Endothelial cell of umbilical vein (primary cell): ENCODE measurements at regions of chr11 and their contacts with region 1.

Region 1: DNA sequence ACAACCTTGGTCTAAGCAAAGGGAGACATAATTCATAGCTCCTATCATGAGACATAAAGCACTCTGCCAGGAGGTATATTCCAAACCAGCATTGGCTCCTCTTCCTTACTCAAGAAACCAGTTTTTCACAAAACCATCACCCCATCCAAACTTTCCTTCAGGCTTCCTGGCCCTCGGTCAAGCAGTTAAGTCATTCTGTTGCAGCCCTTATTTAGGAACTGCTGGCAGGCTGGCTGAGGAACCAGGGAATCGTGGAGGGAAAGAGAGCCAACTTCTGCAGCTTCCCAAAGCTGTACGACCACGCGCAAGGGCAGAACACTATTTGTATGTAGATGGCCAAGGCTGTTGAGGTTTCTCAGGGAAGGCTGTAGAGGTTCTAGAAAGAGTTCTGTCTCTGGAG is 680 bp downstream of the IFT46 start:
- DNase-seq: no peak
- H3K4me3 ChIP-seq: no peak overlapping the region
- H3K27ac ChIP-seq: no peak overlapping the region
- H3K4me1 ChIP-seq: peaks cover 5% of the 10 kb centered on the region
- H3K27me3 ChIP-seq: no peaks in the 10 kb centered on the region
- CTCF ChIP-seq: no peak
- POLR2A ChIP-seq: no peak

Region 2: DNA sequence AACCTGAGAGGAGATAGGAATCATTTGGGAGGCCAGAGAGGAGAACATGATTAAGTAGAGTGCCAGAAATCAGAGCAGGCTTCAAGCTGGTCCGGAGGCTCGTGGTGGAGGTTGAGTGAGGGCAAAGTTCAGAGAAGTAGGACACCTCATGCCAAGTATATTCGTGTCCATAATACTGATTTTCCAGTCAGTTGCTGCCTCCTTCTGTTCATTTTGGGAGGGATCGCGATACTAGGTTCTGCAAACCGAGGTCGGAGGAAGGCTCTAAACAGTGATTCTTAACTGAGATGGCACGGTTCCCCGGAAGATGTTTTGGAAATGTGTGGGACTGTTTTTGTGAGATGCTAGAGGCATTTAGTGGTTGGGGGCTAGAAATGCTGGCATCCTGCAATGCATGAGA is 274.1 kb before region 1 on chr11:
- CTCF ChIA-PET with region 1: no interaction called
- POLR2A ChIA-PET with region 1: no interaction called
- dilution Hi-C with region 1: no loop called
- intact Hi-C with region 1: loop called (anchors 5 kb)
- DNase-seq: peak; percentile 68
- H3K4me3 ChIP-seq: no peak overlapping the region
- H3K27ac ChIP-seq: no peak overlapping the region
- H3K4me1 ChIP-seq: no peaks in the 10 kb centered on the region
- H3K27me3 ChIP-seq: no peaks in the 10 kb centered on the region
- CTCF ChIP-seq: peak; percentile 30 to 53
- POLR2A ChIP-seq: no peak

Region 3: GRCh38 chr11:118435893-118436624 is 129.0 kb before region 1 on chr11 and contains the start of gene KMT2A:
- CTCF ChIA-PET with region 1: no interaction called
- POLR2A ChIA-PET with region 1: no interaction called
- dilution Hi-C with region 1: no loop called
- intact Hi-C with region 1: loop called (anchors 5 kb)
- DNase-seq: peak; percentile 98
- H3K4me3 ChIP-seq: peak within 1 kb of the TSS; percentile 82 to 94 (median 90)
- H3K27ac ChIP-seq: peak within 1 kb of the TSS; percentile 45
- H3K4me1 ChIP-seq: peaks cover 29% of the 10 kb centered on the region
- H3K27me3 ChIP-seq: no peaks in the 10 kb centered on the region
- CTCF ChIP-seq: no peak
- POLR2A ChIP-seq: peak; percentile 81
- total RNA-seq, gene KMT2A: 63.9 and 64.1 TPM in 2 replicates

Region 4: GRCh38 chr11:118514103-118514502 is 50.9 kb before region 1 on chr11:
- CTCF ChIA-PET with region 1: no interaction called
- POLR2A ChIA-PET with region 1: no interaction called
- dilution Hi-C with region 1: no loop called
- intact Hi-C with region 1: loop called (anchors 10 kb)
- DNase-seq: no peak
- H3K4me3 ChIP-seq: no peak overlapping the region
- H3K27ac ChIP-seq: no peak overlapping the region
- H3K4me1 ChIP-seq: no peaks in the 10 kb centered on the region
- H3K27me3 ChIP-seq: no peaks in the 10 kb centered on the region
- CTCF ChIP-seq: no peak
- POLR2A ChIP-seq: no peak

Region 5: GRCh38 chr11:118530408-118531339 is 34.4 kb before region 1 on chr11 and contains the start of gene TMEM25:
- CTCF ChIA-PET with region 1: no interaction called
- POLR2A ChIA-PET with region 1: no interaction called
- dilution Hi-C with region 1: no loop called
- intact Hi-C with region 1: loop called (anchors 1 kb)
- DNase-seq: peak; percentile 69
- H3K4me3 ChIP-seq: peak within 1 kb of the TSS; percentile 19 to 78 (median 55)
- H3K27ac ChIP-seq: no peak within 1 kb of the TSS
- H3K4me1 ChIP-seq: peaks cover 10% of the 10 kb centered on the region
- H3K27me3 ChIP-seq: no peaks in the 10 kb centered on the region
- CTCF ChIP-seq: no peak
- POLR2A ChIP-seq: peak; percentile 26
- total RNA-seq, gene TMEM25: 18.9 and 20.4 TPM in 2 replicates